ENCODE measurements at regions of chr3 and their contacts with region 1.

Region 1: DNA sequence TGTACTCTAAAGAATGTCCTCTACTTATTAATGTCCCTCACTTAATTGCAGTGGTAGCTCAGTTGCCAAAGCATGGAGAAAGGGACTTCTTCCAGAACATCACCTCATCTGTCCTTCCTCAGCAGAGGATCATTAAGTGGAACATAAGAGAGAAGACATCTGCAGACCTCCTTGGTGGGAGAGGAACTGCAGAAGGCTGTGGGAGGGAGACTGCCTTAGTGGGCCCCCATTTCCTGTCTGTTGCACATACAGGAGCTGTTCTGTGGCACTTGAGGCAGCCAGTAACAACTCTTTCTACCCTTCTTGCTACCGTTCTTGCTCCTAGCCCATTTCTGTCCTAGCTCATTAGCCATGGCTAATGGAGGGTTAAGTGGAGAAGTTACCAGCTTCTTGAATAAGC is 33.6 kb downstream of the HPS3 start:
- DNase-seq: no peak
- H3K4me3 ChIP-seq: no peak overlapping the region
- H3K27ac ChIP-seq: no peak overlapping the region
- H3K4me1 ChIP-seq: peaks cover 15% of the 10 kb centered on the region
- H3K27me3 ChIP-seq: no peaks in the 10 kb centered on the region
- CTCF ChIP-seq: no peak

Region 2: DNA sequence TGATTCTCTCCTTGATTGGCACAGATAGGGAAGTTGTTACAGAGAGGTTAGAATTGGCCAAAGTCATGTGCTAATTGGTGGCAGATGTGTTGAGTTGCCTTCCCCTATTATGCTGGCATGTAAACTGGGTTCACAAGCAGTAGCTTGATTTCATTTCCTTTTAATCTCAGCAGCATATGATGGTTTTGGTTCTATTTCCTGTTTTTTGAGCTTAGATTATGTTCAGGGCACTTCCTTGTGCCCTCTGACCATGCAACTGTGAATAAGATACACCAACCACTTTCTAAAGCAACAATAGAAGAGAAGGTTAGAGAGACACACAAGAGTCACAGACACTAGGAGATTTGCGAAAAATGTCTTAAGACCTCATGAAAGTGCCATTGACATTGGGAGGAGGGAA is 17.1 kb before region 1 on chr3:
- CTCF ChIA-PET with region 1: no interaction called
- POLR2A ChIA-PET with region 1: interaction called, 14 read pairs
- intact Hi-C with region 1: no loop called
- DNase-seq: no peak
- H3K4me3 ChIP-seq: no peak overlapping the region
- H3K27ac ChIP-seq: no peak overlapping the region
- H3K4me1 ChIP-seq: no peaks in the 10 kb centered on the region
- H3K27me3 ChIP-seq: no peaks in the 10 kb centered on the region
- CTCF ChIP-seq: no peak

Measured in PC-9 (cell line).